HepG2 (cell line): ENCODE measurements at regions of chr21 and their contacts with region 1.

Region 1: GRCh38 chr21:46228345-46229051 is at the start of gene LSS:
- DNase-seq: peak; percentile 95
- ATAC-seq: peak; percentile 88
- H3K4me3 ChIP-seq: peak within 1 kb of the TSS; percentile 91 to 99 (median 98)
- H3K27ac ChIP-seq: peak within 1 kb of the TSS; percentile 78
- H3K4me1 ChIP-seq: peaks cover 61% of the 10 kb centered on the region
- H3K27me3 ChIP-seq: no peaks in the 10 kb centered on the region
- CTCF ChIP-seq: no peak
- EP300 ChIP-seq: no peak
- POLR2A ChIP-seq: peak in 1 of 2 experiments; percentile 46; a peak in 2 of 4 replicates
- RAD21 ChIP-seq: 0 out of 2 replicates have a peak, but pooled peaks have one; percentile 9
- total RNA-seq, gene LSS: 73.5 and 113 TPM in 2 replicates

Region 2: DNA sequence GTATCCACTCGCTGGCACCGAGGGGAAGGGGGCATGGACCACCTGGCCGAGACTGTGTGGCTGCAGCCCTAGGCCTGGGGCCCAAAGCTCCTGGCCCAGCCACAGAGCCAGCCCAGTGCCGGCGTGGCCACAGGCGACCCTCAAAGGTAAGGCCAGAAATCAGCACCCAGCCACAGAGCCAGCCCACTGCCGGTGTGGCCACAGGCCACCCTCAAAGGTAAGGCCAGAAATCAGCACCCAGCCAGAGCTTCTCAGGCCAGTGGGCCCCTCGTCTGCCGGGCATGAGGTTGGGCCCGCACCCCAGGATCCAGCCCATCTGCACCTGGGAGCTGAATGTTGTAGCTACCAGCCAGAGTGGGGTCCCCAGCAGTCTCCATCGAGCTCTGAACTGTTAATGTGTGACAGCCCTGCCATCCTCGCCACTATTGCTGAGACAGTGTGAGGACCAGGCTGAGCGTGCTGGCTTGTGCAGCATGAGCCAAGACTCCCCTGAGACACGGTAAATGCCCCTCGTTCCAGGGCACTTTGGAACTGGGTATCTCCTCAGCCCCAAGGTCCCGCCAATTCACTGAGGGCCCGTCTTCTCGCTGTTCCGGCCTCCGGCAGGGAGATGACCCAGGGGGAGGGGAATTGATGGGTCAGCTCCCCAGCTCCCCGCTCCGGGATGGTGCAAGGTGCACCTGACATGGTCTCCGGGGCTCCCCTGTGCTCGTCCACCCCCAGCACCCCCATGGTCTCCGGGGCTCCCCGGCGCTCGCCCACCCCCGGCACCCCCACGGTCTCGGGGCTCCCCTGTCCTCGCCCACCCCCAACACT is 68.4 kb before region 1 on chr21:
- CTCF ChIA-PET with region 1: no interaction called
- POLR2A ChIA-PET with region 1: no interaction called
- in situ Hi-C with region 1: no loop called
- intact Hi-C with region 1: loop called (anchors 5 kb)
- DNase-seq: no peak
- ATAC-seq: peak; percentile 4; the same call in 1 of the 3 replicates
- H3K4me3 ChIP-seq: no peak overlapping the region
- H3K27ac ChIP-seq: no peak overlapping the region
- H3K4me1 ChIP-seq: peaks cover 26% of the 10 kb centered on the region
- H3K27me3 ChIP-seq: no peaks in the 10 kb centered on the region; a peak in 1 of 5 replicates
- CTCF ChIP-seq: no peak
- EP300 ChIP-seq: no peak
- POLR2A ChIP-seq: no peak
- RAD21 ChIP-seq: no peak

Region 3: GRCh38 chr21:46285761-46286496 is 57.4 kb after region 1 on chr21 and contains the start of gene YBEY:
- CTCF ChIA-PET with region 1: no interaction called
- POLR2A ChIA-PET with region 1: no interaction called
- in situ Hi-C with region 1: no loop called
- intact Hi-C with region 1: loop called (anchors 10 kb)
- DNase-seq: peak; percentile 82
- ATAC-seq: peak; percentile 98
- H3K4me3 ChIP-seq: peak within 1 kb of the TSS; percentile 84 to 98 (median 89)
- H3K27ac ChIP-seq: peak within 1 kb of the TSS; percentile 95
- H3K4me1 ChIP-seq: peaks cover 63% of the 10 kb centered on the region
- H3K27me3 ChIP-seq: no peaks in the 10 kb centered on the region; a peak in 1 of 5 replicates
- CTCF ChIP-seq: peak; percentile 62
- EP300 ChIP-seq: no peak
- POLR2A ChIP-seq: peak; percentile 75 to 80
- RAD21 ChIP-seq: peak; percentile 52; the same call in 1 of the 2 replicates
- total RNA-seq, gene YBEY: 6.5 and 8.9 TPM in 2 replicates